ENCODE measurements at regions of chr10 and their contacts with region 1.

Region 1: GRCh38 chr10:95841661-95842498 is 65.9 kb upstream of the CC2D2B start:
- DNase-seq: peak; percentile 84
- H3K4me3 ChIP-seq: no peak overlapping the region
- H3K27ac ChIP-seq: peak overlapping the region; percentile 22
- H3K4me1 ChIP-seq: peaks cover 7% of the 10 kb centered on the region
- H3K27me3 ChIP-seq: no peaks in the 10 kb centered on the region
- CTCF ChIP-seq: peak; percentile 39 to 44
- POLR2A ChIP-seq: no peak

Region 2: GRCh38 chr10:95688648-95689047 is 153.2 kb before region 1 on chr10:
- CTCF ChIA-PET with region 1: interaction called, 758 read pairs
- POLR2A ChIA-PET with region 1: interaction called, 7 read pairs
- dilution Hi-C with region 1: no loop called
- intact Hi-C with region 1: no loop called
- DNase-seq: no peak
- H3K4me3 ChIP-seq: no peak overlapping the region
- H3K27ac ChIP-seq: no peak overlapping the region
- H3K4me1 ChIP-seq: peaks cover 13% of the 10 kb centered on the region
- H3K27me3 ChIP-seq: no peaks in the 10 kb centered on the region
- CTCF ChIP-seq: no peak
- POLR2A ChIP-seq: no peak

Region 3: GRCh38 chr10:95716466-95717224 is 125.2 kb before region 1 on chr10:
- CTCF ChIA-PET with region 1: interaction called, 10 read pairs
- POLR2A ChIA-PET with region 1: no interaction called
- dilution Hi-C with region 1: no loop called
- intact Hi-C with region 1: no loop called
- DNase-seq: no peak
- H3K4me3 ChIP-seq: no peak overlapping the region
- H3K27ac ChIP-seq: no peak overlapping the region
- H3K4me1 ChIP-seq: peaks cover 2% of the 10 kb centered on the region
- H3K27me3 ChIP-seq: no peaks in the 10 kb centered on the region
- CTCF ChIP-seq: no peak
- POLR2A ChIP-seq: no peak

Region 4: DNA sequence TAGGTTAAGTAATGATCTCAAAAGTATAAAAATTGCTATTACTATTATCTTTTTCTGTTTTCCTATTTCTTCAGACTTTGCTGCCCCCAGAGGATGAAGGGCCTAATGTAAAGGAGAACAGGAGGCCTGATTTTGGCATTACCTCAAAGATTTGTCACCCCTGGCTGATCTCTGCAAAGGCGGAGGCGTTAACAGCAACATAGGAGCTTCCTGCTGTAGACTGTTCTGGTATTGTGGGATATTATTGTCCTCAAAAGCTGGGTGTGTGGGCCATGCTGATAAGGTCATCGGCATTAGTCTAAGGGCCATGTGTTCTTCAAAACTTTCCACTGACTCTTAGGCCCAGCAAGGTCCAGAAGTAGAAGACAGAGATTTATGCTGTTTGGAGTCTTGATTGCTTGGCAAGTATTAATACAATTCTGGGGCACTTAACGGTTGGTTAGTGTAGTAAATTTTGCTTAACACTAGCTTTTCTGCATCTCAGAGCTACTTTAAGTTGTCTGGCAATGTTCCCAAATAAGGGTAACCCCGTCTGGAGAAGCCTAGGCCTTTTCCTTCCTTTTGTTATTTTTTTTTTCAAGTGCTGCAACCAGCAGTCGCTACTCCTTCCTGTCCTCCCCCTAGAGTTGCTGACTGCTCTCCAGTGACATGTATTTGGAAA is 99.9 kb before region 1 on chr10:
- CTCF ChIA-PET with region 1: interaction called, 51 read pairs
- POLR2A ChIA-PET with region 1: no interaction called
- dilution Hi-C with region 1: no loop called
- intact Hi-C with region 1: loop called (anchors 1 kb)
- DNase-seq: peak; percentile 98
- H3K4me3 ChIP-seq: peak overlapping the region in 1 of 3 experiments; percentile 1
- H3K27ac ChIP-seq: peak overlapping the region; percentile 75
- H3K4me1 ChIP-seq: peaks cover 26% of the 10 kb centered on the region
- H3K27me3 ChIP-seq: no peaks in the 10 kb centered on the region
- CTCF ChIP-seq: peak; percentile 41 to 58
- POLR2A ChIP-seq: no peak

Region 5: DNA sequence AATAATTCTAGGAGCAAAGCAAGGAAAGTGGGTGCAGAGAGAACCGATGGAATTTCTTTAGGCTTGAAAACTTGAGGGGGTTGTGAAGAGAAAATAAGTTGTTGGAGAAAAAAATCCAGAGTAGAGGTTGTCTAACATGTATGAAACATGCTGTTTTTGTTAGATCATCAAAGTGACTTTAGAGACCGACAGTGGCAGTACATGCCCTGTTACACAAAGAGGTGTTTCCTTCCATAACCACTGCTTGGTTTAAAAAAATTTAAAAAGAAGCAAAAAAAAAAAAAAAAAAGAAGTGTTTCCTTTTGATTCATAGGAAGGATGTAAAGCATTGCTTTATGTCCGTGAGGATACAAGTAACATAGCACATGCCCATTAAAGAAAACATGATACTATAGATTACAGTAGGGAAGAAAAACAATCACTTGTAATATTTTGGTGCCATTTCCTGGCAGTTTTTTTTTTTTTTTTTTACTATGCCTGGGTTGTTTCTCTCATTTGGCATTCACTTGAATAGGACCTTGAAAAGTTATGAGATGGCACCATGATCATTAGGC is 79.9 kb before region 1 on chr10:
- CTCF ChIA-PET with region 1: interaction called, 5 read pairs
- POLR2A ChIA-PET with region 1: no interaction called
- dilution Hi-C with region 1: no loop called
- intact Hi-C with region 1: loop called (anchors 1 kb)
- DNase-seq: peak; percentile 79
- H3K4me3 ChIP-seq: no peak overlapping the region
- H3K27ac ChIP-seq: peak overlapping the region; percentile 16
- H3K4me1 ChIP-seq: peaks cover 29% of the 10 kb centered on the region
- H3K27me3 ChIP-seq: no peaks in the 10 kb centered on the region
- CTCF ChIP-seq: no peak
- POLR2A ChIP-seq: no peak

Region 6: DNA sequence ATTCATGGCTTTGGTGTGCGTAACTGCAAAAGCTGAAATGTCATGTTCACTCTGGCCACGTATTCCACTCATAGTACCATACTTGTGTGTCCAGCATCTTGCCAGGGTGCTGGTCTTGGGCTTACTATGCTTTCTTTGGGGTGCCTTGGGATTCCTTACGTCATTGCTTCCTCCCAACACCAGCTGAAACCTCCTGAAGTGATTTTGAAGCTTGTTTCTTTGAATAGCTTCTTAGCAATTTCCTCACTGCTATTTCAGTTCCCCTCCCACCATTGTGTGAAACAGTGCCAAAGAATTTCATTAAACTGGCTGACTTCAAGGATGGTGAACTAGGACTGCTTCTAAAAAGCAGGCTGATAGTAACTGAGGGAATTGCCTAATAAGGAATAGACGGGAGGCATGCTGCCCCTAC is 49.0 kb before region 1 on chr10:
- CTCF ChIA-PET with region 1: interaction called, 15 read pairs
- POLR2A ChIA-PET with region 1: no interaction called
- dilution Hi-C with region 1: no loop called
- intact Hi-C with region 1: loop called (anchors 2 kb)
- DNase-seq: peak; percentile 89
- H3K4me3 ChIP-seq: no peak overlapping the region
- H3K27ac ChIP-seq: peak overlapping the region; percentile 29
- H3K4me1 ChIP-seq: peaks cover 40% of the 10 kb centered on the region
- H3K27me3 ChIP-seq: no peaks in the 10 kb centered on the region
- CTCF ChIP-seq: no peak
- POLR2A ChIP-seq: no peak

Region 7: GRCh38 chr10:95864906-95865813 is 23.3 kb after region 1 on chr10:
- CTCF ChIA-PET with region 1: interaction called, 27 read pairs
- POLR2A ChIA-PET with region 1: no interaction called
- dilution Hi-C with region 1: no loop called
- intact Hi-C with region 1: loop called (anchors 1 kb)
- DNase-seq: peak; percentile 69
- H3K4me3 ChIP-seq: no peak overlapping the region
- H3K27ac ChIP-seq: no peak overlapping the region
- H3K4me1 ChIP-seq: no peaks in the 10 kb centered on the region
- H3K27me3 ChIP-seq: no peaks in the 10 kb centered on the region
- CTCF ChIP-seq: peak; percentile 59 to 73
- POLR2A ChIP-seq: no peak

Region 8: GRCh38 chr10:96044736-96045135 is 202.9 kb after region 1 on chr10:
- CTCF ChIA-PET with region 1: no interaction called
- POLR2A ChIA-PET with region 1: no interaction called
- dilution Hi-C with region 1: no loop called
- intact Hi-C with region 1: no loop called
- DNase-seq: peak; percentile 54
- H3K4me3 ChIP-seq: peak overlapping the region; percentile 78 to 99 (median 98)
- H3K27ac ChIP-seq: peak overlapping the region; percentile 76
- H3K4me1 ChIP-seq: peaks cover 17% of the 10 kb centered on the region
- H3K27me3 ChIP-seq: no peaks in the 10 kb centered on the region
- CTCF ChIP-seq: no peak
- POLR2A ChIP-seq: no peak

Measured in endothelial cell of umbilical vein (primary cell).